Activated CD4-positive, alpha-beta T cell treated with anti-CD3 and anti-CD28 coated beads, Interleukin-2, amount 10 ng/mL, durations not matched to agents 24 days and 14 days (primary cell): ENCODE measurements at regions of chr13 and their contacts with region 1.

Region 1: DNA sequence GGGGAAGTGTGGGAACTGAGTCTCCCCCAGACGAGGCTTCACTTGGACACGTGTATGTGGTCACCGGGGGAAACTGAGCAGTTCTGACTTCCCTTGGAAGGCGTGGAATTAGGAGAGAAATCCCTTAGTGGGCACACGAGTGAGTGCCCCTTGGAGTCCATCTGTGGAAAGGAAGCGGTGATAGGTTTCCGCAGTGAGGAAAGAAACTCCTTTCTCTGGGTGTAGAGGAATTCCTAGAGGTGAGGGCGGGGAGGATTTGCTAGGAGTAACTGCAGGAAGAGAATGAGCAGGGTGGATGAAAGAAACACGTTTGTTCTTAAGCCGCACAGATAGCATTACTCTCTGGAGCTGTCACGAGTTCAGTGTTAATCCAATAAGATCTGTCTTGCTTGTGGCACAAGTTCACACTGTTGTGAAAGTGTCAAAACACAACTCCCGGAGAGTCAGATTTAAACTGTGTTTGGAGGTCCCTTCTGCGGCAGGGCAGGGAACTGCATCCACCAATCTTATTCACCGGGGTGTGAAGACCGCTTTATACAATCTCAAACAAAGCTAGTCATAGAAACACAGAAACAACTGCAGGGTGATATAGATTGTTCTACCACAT is 1.2 kb downstream of the KL start:
- DNase-seq: peak; percentile 84
- H3K4me3 Mint-ChIP-seq: peak overlapping the region; percentile 76
- H3K27ac Mint-ChIP-seq: peak overlapping the region; percentile 68
- H3K4me1 Mint-ChIP-seq: peaks cover 11% of the 10 kb centered on the region
- H3K27me3 Mint-ChIP-seq: peaks cover 59% of the 10 kb centered on the region

Region 2: DNA sequence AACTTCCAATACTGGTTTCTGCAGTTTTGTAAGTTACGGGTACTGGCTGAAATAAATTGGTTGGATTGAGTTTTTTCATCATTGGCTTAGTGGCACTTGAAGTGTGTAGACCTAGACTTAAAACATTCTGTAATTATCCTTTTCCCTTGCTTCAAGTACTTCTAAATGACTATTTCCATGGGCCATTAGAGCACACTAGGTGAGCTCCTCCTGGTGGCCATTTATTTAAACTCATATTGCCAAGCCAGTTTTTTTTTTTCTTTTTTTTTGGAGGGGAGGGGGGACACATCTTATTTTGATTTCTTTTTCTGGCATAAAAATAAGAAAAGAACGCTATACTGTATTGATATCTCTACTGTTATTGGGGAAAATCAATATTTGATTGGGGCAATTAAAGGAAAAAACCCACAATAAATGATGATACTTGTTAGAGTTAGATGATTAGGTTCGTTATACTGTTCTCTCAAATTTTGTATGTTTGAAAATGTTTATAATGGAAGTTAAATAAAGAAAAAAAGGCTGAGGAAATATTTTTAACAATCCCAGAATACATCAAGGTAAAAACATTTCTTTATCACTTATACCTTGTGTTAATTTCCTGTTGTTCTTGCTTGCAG is 348.3 kb before region 1 on chr13:
- intact Hi-C with region 1: loop called (anchors 2 kb)
- DNase-seq: peak; percentile 69
- H3K4me3 Mint-ChIP-seq: no peak overlapping the region
- H3K27ac Mint-ChIP-seq: no peak overlapping the region
- H3K4me1 Mint-ChIP-seq: peaks cover 4% of the 10 kb centered on the region
- H3K27me3 Mint-ChIP-seq: no peaks in the 10 kb centered on the region

Region 3: DNA sequence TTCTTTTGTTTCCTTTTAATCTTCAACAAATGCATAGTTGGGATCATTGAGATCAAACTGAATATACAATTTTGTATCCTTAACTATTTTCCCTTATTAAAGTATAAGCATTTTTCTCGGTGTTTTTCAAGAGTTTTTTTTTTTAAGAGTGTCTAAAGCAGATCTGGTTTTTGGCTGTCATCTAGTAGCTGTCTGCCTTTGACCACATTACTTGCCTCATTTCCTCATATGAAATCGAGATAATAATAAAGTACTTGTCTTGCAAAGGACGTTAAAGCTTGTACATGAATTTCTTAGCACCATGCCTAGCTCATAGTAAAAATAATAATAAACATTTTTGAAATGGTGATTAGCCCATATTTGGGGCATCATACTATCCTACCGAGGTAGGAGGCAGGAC is 310.0 kb before region 1 on chr13:
- intact Hi-C with region 1: no loop called
- DNase-seq: no peak
- H3K4me3 Mint-ChIP-seq: no peak overlapping the region
- H3K27ac Mint-ChIP-seq: no peak overlapping the region
- H3K4me1 Mint-ChIP-seq: peaks cover 7% of the 10 kb centered on the region
- H3K27me3 Mint-ChIP-seq: no peaks in the 10 kb centered on the region

Region 4: DNA sequence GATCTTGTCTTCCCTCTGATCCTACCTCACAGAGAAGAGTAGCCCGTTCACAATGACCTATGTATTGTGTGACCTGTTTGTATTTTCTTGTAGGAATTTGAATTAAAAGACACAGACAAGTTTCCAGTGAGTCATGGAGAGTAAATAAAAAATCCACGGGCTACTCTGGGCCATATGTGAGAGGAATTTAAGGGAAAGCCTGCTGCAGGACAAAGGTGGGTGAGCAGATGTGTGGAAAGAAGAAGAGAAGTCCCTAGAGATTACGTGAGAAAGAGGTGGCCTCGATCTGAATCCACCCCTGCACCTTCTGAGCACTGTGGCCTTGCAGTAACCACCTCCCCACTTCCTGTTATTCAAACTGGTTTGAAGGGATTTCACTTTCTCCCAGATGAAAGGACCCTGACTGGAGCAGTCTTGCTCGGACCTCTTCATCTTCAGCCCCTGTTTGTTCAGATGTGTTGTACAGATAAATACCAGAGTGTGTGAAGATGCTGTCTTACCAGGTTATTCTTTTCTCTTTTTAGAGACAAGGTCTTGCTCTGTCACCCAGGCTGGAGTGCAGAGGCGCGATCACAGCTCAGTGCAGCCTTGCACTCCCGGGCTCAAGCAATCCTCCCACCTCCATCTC is 225.8 kb before region 1 on chr13:
- intact Hi-C with region 1: loop called (anchors 5 kb)
- DNase-seq: peak; percentile 87
- H3K4me3 Mint-ChIP-seq: peak overlapping the region; percentile 54
- H3K27ac Mint-ChIP-seq: peak overlapping the region; percentile 46
- H3K4me1 Mint-ChIP-seq: peaks cover 43% of the 10 kb centered on the region
- H3K27me3 Mint-ChIP-seq: no peaks in the 10 kb centered on the region

Region 5: GRCh38 chr13:33033051-33033812 is 15.8 kb after region 1 on chr13:
- intact Hi-C with region 1: loop called (anchors 2 kb)
- DNase-seq: peak; percentile 73
- H3K4me3 Mint-ChIP-seq: peak overlapping the region; percentile 84
- H3K27ac Mint-ChIP-seq: peak overlapping the region; percentile 89
- H3K4me1 Mint-ChIP-seq: peaks cover 10% of the 10 kb centered on the region
- H3K27me3 Mint-ChIP-seq: peaks cover 4% of the 10 kb centered on the region

Region 6: DNA sequence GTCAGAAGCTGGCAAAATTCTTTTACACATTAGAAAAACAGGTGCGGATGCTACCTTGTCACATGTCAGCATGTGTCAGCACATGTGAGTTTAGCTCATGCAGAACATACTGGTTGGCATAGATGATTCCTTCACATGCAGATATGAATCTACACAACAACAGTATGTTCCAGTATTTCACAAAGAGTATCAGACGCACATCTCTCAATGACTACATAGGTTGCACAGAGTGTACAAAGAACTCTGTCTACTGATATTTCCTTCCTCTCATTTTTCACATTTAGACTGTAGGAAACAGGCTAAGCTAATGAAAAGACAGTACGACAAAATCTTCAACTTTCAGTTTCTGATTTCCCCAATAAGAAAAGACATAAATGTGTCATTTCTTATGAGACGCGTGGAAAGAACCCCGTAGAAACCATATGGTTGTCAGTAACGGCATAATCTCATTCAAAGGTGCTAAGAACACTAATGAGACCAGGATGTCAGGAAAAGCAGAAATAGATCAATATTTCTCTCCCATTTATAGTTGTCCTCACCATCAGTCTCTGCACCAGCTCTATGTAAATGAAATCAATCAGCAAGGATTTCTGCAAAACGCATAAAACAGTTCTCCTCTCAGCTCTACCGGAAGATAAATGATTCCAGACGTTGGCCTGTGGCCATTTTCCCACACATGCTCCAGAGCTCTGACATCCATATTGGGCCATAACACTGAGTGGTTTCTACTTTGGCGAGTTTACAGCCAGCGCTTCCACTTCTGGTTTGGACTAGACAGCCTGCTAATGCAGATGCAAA is 186.9 kb after region 1 on chr13:
- intact Hi-C with region 1: loop called (anchors 5 kb)
- DNase-seq: no peak
- H3K4me3 Mint-ChIP-seq: peak overlapping the region; percentile 82
- H3K27ac Mint-ChIP-seq: peak overlapping the region; percentile 87
- H3K4me1 Mint-ChIP-seq: peaks cover 49% of the 10 kb centered on the region
- H3K27me3 Mint-ChIP-seq: no peaks in the 10 kb centered on the region